ENCODE measurements at regions of chr1 and their contacts with region 1.

Region 1: GRCh38 chr1:25997828-25998761 is at the start of gene PAFAH2:
- DNase-seq: peak; percentile 97
- ATAC-seq: peak; percentile 99
- total RNA-seq, gene PAFAH2: 9.8 TPM

Region 2: GRCh38 chr1:25904943-25905679 is 93.0 kb before region 1 on chr1:
- intact Hi-C with region 1: loop called (anchors 5 kb)
- DNase-seq: peak; percentile 96
- ATAC-seq: peak; percentile 96

Region 3: DNA sequence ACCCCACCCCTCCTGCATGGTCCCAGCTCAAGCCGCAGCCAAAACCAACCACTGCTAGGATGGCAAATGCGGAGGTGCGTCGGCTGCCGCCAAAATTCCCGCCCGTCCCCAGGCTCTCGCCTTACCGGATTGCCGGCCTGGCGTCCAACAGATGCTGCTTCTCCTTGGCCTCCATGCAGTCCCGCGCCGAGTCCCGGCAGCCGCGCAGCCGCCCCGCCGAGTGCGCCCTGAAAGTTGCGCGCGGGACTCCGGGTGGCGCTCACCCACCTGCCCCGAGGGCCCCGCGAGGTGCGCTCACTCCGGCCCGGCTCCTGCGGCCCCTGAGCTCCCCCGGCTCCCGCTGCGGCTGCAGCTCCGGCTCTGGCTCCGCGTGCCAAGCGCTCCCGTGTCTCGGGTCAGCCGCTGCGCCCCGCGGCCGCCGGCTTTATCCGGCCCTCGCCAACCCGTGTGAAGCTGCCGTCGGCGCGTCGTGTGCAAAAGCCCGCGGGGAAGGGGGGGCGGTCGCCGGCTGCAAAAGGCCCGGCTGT is 47.7 kb after region 1 on chr1 and contains the start of gene SLC30A2:
- intact Hi-C with region 1: no loop called
- DNase-seq: no peak
- ATAC-seq: peak; percentile 25
- total RNA-seq, gene SLC30A2: 6.4 TPM

Region 4: DNA sequence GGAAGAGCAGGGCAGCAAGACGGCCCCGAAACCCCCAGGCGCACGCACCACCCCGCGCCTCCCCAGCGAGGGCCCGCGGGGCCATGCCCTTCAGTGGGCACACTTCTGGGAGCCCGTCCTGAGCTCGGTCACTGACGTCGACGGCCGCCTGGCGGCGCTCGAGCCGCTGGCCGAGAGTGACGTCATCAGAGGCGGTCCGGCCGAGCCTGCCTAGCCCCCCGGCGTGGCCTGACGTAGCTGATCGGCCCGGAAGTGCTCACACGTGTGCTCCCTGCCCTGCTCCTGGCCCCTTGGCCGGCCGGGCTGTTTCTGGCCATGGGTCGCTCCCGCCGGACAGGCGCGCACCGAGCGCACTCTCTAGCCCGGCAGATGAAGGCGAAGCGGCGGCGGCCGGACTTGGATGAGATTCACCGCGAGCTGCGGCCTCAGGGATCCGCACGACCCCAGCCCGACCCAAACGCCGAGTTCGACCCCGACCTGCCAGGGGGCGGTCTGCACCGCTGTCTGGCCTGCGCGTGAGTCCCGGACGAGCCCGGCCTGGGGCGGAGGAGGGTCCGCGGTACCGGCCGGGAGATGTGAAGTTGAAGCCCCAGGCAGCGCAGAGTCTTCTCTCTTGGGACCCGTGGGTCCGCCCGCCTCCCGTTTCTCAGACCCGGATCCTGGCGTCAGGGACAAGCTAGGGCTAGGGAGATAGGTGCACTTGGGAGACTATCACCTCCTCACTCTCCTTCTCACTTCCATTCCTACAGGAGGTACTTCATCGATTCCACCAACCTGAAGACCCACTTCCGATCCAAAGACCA is 171.8 kb after region 1 on chr1 and contains the start of gene ZNF593:
- intact Hi-C with region 1: no loop called
- DNase-seq: peak; percentile 96
- ATAC-seq: peak; percentile 96
- total RNA-seq, gene ZNF593: 11.6 TPM

Measured in left ventricle myocardium superior (tissue), 1 donor.